ENCODE measurements at regions of chr14 and their contacts with region 1.

Region 1: DNA sequence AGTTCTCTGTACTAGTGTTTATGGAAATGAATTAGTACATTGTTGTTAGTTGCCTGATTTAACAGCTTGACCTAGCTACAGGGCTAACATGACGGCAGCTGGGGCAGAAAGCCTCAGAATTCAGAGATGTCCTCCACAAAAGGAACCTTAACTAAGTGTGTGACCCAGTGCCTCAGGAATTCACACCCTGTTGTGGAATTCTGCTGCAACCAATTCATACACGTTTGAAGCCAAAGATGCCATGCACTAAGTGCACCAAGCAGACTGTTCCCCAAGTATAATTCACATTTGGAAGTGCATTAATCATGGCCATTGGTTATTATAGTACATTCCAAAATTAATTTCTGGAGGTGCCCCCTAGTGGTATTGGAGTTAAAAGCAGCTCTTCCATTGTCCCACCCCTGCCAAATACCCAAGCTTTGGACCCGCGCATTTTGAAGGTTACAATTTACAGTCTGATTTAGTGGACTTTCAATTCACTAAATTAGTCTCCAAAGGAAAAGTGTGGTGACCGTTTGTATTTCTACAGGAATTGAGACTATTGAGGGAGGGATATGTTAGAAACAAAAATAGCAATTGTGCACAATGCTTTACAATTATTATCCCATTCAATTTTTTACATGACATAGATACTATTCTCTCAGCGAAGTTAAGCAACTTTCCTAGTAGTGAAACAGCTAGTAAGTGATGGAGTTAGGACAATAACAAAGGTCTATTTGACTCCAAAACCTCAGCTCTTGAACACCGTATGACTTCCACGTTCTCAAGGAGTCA is 85.9 kb downstream of the PAX9 start:
- DNase-seq: no peak
- H3K4me3 ChIP-seq: no peak overlapping the region
- H3K27ac ChIP-seq: no peak overlapping the region
- H3K4me1 ChIP-seq: peaks cover 0 to 2% (median 0%) of the 10 kb centered on the region in 4 experiments; a peak in 1 of 7 replicates
- H3K27me3 ChIP-seq: no peaks in the 10 kb centered on the region
- CTCF ChIP-seq: peak; percentile 21 to 60 (median 41)
- EP300 ChIP-seq: no peak
- POLR2A ChIP-seq: no peak
- RAD21 ChIP-seq: peak; percentile 8 to 37; a peak in 1 of 4 replicates

Region 2: GRCh38 chr14:36619853-36620252 is 127.7 kb before region 1 on chr14:
- CTCF ChIA-PET with region 1: no interaction called
- POLR2A ChIA-PET with region 1: no interaction called
- DNase-seq: no peak
- H3K4me3 ChIP-seq: no peak overlapping the region
- H3K27ac ChIP-seq: no peak overlapping the region
- H3K4me1 ChIP-seq: no peaks in the 10 kb centered on the region
- H3K27me3 ChIP-seq: no peaks in the 10 kb centered on the region
- CTCF ChIP-seq: no peak
- EP300 ChIP-seq: no peak
- POLR2A ChIP-seq: no peak
- RAD21 ChIP-seq: no peak

Region 3: GRCh38 chr14:36724162-36724561 is 23.4 kb before region 1 on chr14:
- CTCF ChIA-PET with region 1: interaction called, 43 read pairs
- POLR2A ChIA-PET with region 1: no interaction called
- DNase-seq: no peak
- H3K4me3 ChIP-seq: no peak overlapping the region
- H3K27ac ChIP-seq: no peak overlapping the region
- H3K4me1 ChIP-seq: no peaks in the 10 kb centered on the region
- H3K27me3 ChIP-seq: no peaks in the 10 kb centered on the region
- CTCF ChIP-seq: no peak
- EP300 ChIP-seq: no peak
- POLR2A ChIP-seq: no peak
- RAD21 ChIP-seq: no peak

Region 4: GRCh38 chr14:36757734-36758601 is 10.4 kb after region 1 on chr14:
- CTCF ChIA-PET with region 1: interaction called, 74 read pairs
- POLR2A ChIA-PET with region 1: no interaction called
- DNase-seq: no peak
- H3K4me3 ChIP-seq: no peak overlapping the region
- H3K27ac ChIP-seq: no peak overlapping the region
- H3K4me1 ChIP-seq: no peaks in the 10 kb centered on the region
- H3K27me3 ChIP-seq: no peaks in the 10 kb centered on the region
- CTCF ChIP-seq: no peak
- EP300 ChIP-seq: no peak
- POLR2A ChIP-seq: no peak
- RAD21 ChIP-seq: no peak

Region 5: DNA sequence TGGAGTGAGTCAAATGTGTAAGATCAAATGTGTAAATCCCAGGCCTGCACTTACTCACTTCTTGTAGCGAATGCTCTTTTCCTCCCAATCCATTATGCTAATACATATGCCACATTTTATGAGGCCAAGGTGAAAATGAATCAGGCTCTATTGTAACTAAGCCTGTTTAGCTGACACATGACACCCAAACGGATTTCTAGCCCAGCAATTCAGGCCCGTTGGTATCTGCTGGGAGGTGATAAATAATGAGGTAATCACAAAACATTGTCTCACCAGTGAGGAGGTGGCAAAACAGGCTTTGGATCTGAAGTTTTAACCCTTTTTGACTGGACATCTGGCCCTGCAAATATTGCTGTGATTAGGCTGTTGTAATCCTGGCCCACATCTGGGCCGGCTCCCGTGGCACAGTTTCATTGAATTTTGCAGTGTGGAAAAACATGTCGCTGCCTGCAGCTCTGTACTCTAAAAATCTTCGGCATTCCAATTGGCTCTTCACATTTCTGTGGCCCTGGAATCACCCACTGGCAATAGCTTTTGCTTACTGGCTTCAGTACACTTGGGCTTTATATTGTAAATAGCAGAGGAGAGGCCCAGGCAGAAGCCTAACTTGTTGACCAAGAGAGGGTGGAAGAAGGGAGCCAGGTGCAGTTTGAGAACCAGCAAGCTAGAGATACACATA is 20.1 kb after region 1 on chr14:
- CTCF ChIA-PET with region 1: interaction called, 74 read pairs
- POLR2A ChIA-PET with region 1: interaction called, 3 read pairs
- DNase-seq: no peak
- H3K4me3 ChIP-seq: no peak overlapping the region
- H3K27ac ChIP-seq: peak overlapping the region; percentile 19; the same call in 1 of the 2 replicates
- H3K4me1 ChIP-seq: peaks cover 2 to 14% (median 5%) of the 10 kb centered on the region in 4 experiments; a peak in 6 of 7 replicates
- H3K27me3 ChIP-seq: no peaks in the 10 kb centered on the region
- CTCF ChIP-seq: no peak
- EP300 ChIP-seq: no peak
- POLR2A ChIP-seq: no peak
- RAD21 ChIP-seq: no peak

Measured in H1 (cell line).